Activated T-helper 1 cell treated with anti-CD3 and anti-CD28 coated beads, Interleukin-12 subunit alpha, Interleukin-12 subunit beta, Interleukin-2, Interleukin-4 antibody, amounts not matched to agents 30 ng/mL and 10 ng/mL and 1 ng/mL, durations not matched to agents 14 hours and 24 hours and 36 hours (primary cell): ENCODE measurements at regions of chr12 and their contacts with region 1.

Region 1: DNA sequence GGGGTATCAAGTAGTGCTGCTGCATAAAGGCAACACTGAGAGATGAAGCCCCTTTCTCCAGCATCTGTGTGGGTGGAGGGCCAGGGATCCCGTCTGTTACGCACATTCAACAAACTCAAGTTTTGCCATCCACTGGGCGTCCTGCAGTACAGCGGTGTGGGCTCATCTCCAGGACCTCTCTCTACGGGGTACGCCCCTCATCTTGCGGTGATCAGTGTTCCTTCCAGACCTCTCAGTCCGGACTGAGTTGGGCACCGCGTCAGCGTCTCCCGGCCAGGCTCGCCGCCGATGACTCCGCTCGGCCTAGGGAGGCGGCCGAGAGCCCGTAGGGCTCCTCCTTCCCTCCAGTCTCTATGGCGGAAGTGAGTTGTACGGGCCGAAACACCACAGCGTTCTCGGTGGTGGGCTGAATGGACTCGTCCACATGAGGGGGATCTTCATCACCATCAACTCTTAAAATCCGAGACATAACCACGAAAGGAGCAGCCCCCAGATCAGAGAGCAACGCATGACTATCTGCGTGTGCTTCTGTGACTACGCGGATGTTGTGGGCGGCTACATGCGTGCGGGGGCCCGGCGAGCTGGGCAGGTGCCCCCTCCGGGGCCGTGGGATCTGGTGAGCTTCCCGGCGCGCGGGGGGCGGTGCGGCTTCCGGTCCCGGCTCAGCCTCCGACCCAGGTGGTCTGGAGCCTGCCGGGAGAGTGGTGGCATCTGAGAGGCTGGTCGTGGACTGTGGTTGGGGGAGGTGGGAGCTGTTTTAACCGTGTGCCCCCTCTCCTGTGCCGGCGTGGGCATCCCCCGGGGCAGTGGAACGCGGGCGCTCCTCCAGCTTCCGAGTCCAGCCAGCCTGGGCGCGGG is at the start of gene ATG101:
- DNase-seq: peak; percentile 84
- H3K4me3 Mint-ChIP-seq: peak within 1 kb of the TSS; percentile 96
- H3K27ac Mint-ChIP-seq: peak within 1 kb of the TSS; percentile 99
- H3K4me1 Mint-ChIP-seq: peaks cover 54% of the 10 kb centered on the region
- H3K27me3 Mint-ChIP-seq: peaks cover 2% of the 10 kb centered on the region
- total RNA-seq, gene ATG101: 56.2 and 63.3 TPM in 2 replicates

Region 2: GRCh38 chr12:51108136-51108535 is 961.4 kb before region 1 on chr12:
- intact Hi-C with region 1: no loop called
- DNase-seq: no peak
- H3K4me3 Mint-ChIP-seq: no peak overlapping the region
- H3K27ac Mint-ChIP-seq: no peak overlapping the region
- H3K4me1 Mint-ChIP-seq: peaks cover 4% of the 10 kb centered on the region
- H3K27me3 Mint-ChIP-seq: no peaks in the 10 kb centered on the region

Region 3: GRCh38 chr12:52050761-52051541 is 18.6 kb before region 1 on chr12 and contains the start of gene NR4A1:
- intact Hi-C with region 1: loop called (anchors 1 kb)
- DNase-seq: peak; percentile 96
- H3K4me3 Mint-ChIP-seq: peak within 1 kb of the TSS; percentile 96
- H3K27ac Mint-ChIP-seq: peak within 1 kb of the TSS; percentile 92
- H3K4me1 Mint-ChIP-seq: peaks cover 42% of the 10 kb centered on the region
- H3K27me3 Mint-ChIP-seq: no peaks in the 10 kb centered on the region
- total RNA-seq, gene NR4A1: 52.7 and 60.3 TPM in 2 replicates